GM12878 (cell line): ENCODE measurements at regions of chr6 and their contacts with region 1.

Region 1: GRCh38 chr6:70520575-70520974 is 46.2 kb upstream of the SDHAF4 start:
- DNase-seq: no peak
- ATAC-seq: peak; percentile 65
- H3K4me3 ChIP-seq: no peak overlapping the region
- H3K27ac ChIP-seq: no peak overlapping the region
- H3K4me1 ChIP-seq: no peaks in the 10 kb centered on the region
- H3K27me3 ChIP-seq: no peaks in the 10 kb centered on the region
- CTCF ChIP-seq: peak; percentile 30 to 61 (median 34); a peak in 4 of 6 replicates
- EP300 ChIP-seq: no peak
- POLR2A ChIP-seq: no peak
- RAD21 ChIP-seq: peak; percentile 85

Region 2: DNA sequence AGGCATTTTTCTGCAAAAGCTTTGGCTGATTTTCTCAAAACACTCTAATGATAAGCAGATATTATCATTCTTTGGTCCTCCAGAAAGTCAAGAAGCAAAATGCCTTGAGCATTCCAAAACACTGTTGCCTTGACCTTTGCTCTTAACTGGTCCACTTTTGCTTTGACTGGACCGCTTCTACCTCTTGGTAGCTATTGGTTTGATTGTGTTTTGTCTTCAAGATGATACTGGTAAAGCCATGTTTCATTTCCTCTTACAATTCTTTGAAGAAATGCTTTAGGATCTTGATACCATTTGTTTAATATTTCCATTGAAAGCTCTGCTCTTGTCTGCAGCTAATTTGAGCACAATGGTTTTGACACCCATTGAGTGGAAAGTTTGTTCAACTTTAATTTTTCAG is 10.6 kb after region 1 on chr6:
- CTCF ChIA-PET with region 1: interaction called, 22 read pairs
- POLR2A ChIA-PET with region 1: interaction called, 4 read pairs
- RAD21 ChIA-PET with region 1: interaction called, 5 read pairs
- SMC1A ChIA-PET with region 1: interaction called, 11 read pairs
- in situ Hi-C with region 1: no loop called
- intact Hi-C with region 1: no loop called
- DNase-seq: peak; percentile 4
- ATAC-seq: peak; percentile 83
- H3K4me3 ChIP-seq: no peak overlapping the region
- H3K27ac ChIP-seq: no peak overlapping the region
- H3K4me1 ChIP-seq: no peaks in the 10 kb centered on the region
- H3K27me3 ChIP-seq: no peaks in the 10 kb centered on the region
- CTCF ChIP-seq: no peak
- EP300 ChIP-seq: peak in 1 of 2 experiments; percentile 48; a peak in 1 of 4 replicates
- POLR2A ChIP-seq: no peak
- RAD21 ChIP-seq: no peak

Region 3: DNA sequence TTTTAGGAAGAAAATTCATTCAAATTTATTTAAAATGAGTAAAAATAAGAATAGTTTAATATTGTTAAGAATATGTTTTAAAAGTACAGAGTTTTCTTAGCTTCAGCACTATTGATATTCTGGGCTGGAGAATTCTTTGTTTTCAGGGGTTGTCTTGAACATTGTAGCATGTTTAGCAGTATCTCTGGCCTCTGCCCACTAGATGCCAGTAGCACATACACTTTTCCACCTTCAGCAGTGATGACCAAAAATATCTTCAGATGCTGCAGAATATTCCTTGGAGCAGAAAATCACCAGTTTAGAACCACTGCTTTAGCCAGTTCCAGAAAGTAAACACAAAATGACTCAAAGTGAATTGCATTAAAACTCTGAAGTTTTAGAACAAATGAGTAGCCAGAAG is 26.7 kb after region 1 on chr6:
- CTCF ChIA-PET with region 1: interaction called, 16 read pairs
- POLR2A ChIA-PET with region 1: no interaction called
- RAD21 ChIA-PET with region 1: interaction called, 3 read pairs
- SMC1A ChIA-PET with region 1: interaction called, 8 read pairs
- in situ Hi-C with region 1: no loop called
- intact Hi-C with region 1: no loop called
- DNase-seq: no peak
- ATAC-seq: peak; percentile 50; the same call in 1 of the 3 replicates
- H3K4me3 ChIP-seq: no peak overlapping the region
- H3K27ac ChIP-seq: no peak overlapping the region
- H3K4me1 ChIP-seq: no peaks in the 10 kb centered on the region
- H3K27me3 ChIP-seq: no peaks in the 10 kb centered on the region
- CTCF ChIP-seq: peak; percentile 33 to 49 (median 43); a peak in 5 of 6 replicates
- EP300 ChIP-seq: no peak
- POLR2A ChIP-seq: no peak
- RAD21 ChIP-seq: peak; percentile 62

Region 4: GRCh38 chr6:70604254-70604653 is 83.7 kb after region 1 on chr6:
- CTCF ChIA-PET with region 1: interaction called, 10 read pairs
- POLR2A ChIA-PET with region 1: no interaction called
- RAD21 ChIA-PET with region 1: interaction called, 3 read pairs
- SMC1A ChIA-PET with region 1: interaction called, 4 read pairs
- in situ Hi-C with region 1: no loop called
- intact Hi-C with region 1: no loop called
- DNase-seq: no peak
- ATAC-seq: no peak
- H3K4me3 ChIP-seq: no peak overlapping the region
- H3K27ac ChIP-seq: no peak overlapping the region
- H3K4me1 ChIP-seq: no peaks in the 10 kb centered on the region
- H3K27me3 ChIP-seq: no peaks in the 10 kb centered on the region
- CTCF ChIP-seq: no peak
- EP300 ChIP-seq: no peak
- POLR2A ChIP-seq: no peak
- RAD21 ChIP-seq: no peak

Region 5: GRCh38 chr6:70955441-70956190 is 435.0 kb after region 1 on chr6:
- CTCF ChIA-PET with region 1: interaction called, 8 read pairs
- POLR2A ChIA-PET with region 1: no interaction called
- RAD21 ChIA-PET with region 1: interaction called, 11 read pairs
- SMC1A ChIA-PET with region 1: interaction called, 5 read pairs
- in situ Hi-C with region 1: no loop called
- intact Hi-C with region 1: loop called (anchors 10 kb)
- DNase-seq: peak; percentile 11
- ATAC-seq: peak; percentile 99
- H3K4me3 ChIP-seq: peak overlapping the region; percentile 74; the same call in 1 of the 2 replicates
- H3K27ac ChIP-seq: no peak overlapping the region
- H3K4me1 ChIP-seq: peaks cover 3% of the 10 kb centered on the region; the same call in 1 of the 2 replicates
- H3K27me3 ChIP-seq: peaks cover 9 to 13% of the 10 kb centered on the region in 2 experiments
- CTCF ChIP-seq: peak; percentile 86 to 89 (median 86)
- EP300 ChIP-seq: no peak
- POLR2A ChIP-seq: no peak
- RAD21 ChIP-seq: peak; percentile 67